Common myeloid progenitor, CD34-positive (primary cell): ENCODE measurements at regions of chr15 and their contacts with region 1.

Region 1: GRCh38 chr15:22224241-22224671 is 143.9 kb downstream of the OR4M2 start:
- DNase-seq: no peak
- H3K4me3 ChIP-seq: no peak overlapping the region
- H3K27ac ChIP-seq: no peak overlapping the region
- H3K4me1 ChIP-seq: peaks cover 0 to 19% (median 8%) of the 10 kb centered on the region in 4 experiments
- H3K27me3 ChIP-seq: peaks cover 0 to 9% (median 0%) of the 10 kb centered on the region in 5 experiments

Region 2: GRCh38 chr15:20356444-20356910 is 1867.8 kb before region 1 on chr15:
- CTCF ChIA-PET with region 1: interaction called, 107 read pairs
- POLR2A ChIA-PET with region 1: no interaction called
- DNase-seq: peak; percentile 79 to 89 (median 81)
- H3K4me3 ChIP-seq: peak overlapping the region in 1 of 7 experiments; percentile 40
- H3K27ac ChIP-seq: no peak overlapping the region
- H3K4me1 ChIP-seq: peaks cover 0 to 7% (median 4%) of the 10 kb centered on the region in 4 experiments
- H3K27me3 ChIP-seq: no peaks in the 10 kb centered on the region